ENCODE measurements at regions of chr14 and their contacts with region 1.

Region 1: GRCh38 chr14:76962303-76962660 is 66.2 kb downstream of the IRF2BPL start:
- DNase-seq: peak; percentile 51
- ATAC-seq: peak; percentile 6
- H3K4me3 Mint-ChIP-seq: peak overlapping the region; percentile 83
- H3K27ac Mint-ChIP-seq: peak overlapping the region; percentile 98
- H3K4me1 Mint-ChIP-seq: peaks cover 77% of the 10 kb centered on the region
- H3K27me3 Mint-ChIP-seq: no peaks in the 10 kb centered on the region

Region 2: DNA sequence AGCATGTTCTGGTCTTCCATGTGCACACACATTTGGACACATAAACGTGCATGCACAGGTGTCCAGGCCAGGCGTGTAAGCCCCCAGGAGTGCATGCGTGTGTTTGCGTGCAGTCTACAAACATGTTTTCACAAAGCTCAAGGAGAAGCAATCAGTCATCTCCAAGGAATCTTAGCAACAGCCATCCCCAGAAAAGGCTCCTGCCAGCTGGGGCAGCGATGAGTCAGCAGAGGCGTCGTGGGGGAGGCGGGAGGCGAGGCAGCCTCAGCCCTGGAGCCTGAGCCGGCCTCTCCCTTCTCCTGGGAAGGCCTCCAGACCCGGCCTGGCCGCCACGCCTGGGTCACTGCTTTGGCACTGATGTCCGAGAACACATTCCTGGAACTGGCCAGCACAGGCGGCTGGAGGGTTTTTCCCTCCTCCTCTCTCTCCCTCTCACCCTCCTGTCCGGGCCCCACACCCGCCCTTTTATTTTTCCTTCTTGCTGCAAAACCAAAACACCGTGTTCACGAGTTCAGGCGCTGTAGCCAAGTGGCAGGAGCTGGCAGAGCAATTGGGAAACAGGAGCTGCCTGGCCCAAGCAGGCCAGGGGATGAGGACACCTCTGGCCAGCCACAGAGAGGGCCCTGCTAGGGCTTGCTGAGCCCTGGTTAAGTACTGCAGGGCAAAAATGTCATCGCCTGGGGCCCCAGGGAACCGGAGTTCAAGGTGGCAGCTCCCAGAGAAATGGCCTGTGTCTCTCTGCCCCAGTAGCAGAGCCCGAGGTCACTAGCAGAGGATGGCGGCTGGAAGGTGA is 43.3 kb before region 1 on chr14:
- POLR2A ChIA-PET with region 1: interaction called, 26 read pairs
- DNase-seq: no peak
- ATAC-seq: no peak
- H3K4me3 Mint-ChIP-seq: peak overlapping the region; percentile 47
- H3K27ac Mint-ChIP-seq: peak overlapping the region; percentile 58
- H3K4me1 Mint-ChIP-seq: peaks cover 49% of the 10 kb centered on the region
- H3K27me3 Mint-ChIP-seq: peaks cover 3% of the 10 kb centered on the region

Region 3: DNA sequence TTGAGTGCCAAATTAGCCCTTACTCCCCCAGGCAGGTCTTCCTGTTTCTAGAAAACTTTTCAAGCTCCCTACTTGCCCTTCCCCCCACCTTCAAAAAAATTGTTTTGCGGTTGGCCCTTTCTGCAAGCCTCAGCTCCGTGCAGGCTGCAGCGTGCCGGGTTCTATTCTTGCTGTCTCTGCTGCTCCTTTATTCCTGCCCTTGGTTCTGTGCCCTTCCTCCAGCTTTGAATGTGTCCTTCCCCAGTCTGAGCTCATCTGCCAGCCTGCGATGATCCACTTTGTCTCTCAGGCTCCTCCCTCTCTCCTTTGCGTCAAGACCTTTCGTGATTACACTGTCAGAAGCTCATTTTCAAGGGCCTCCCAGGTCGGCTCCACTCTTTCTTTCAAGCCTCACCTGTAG is 32.4 kb before region 1 on chr14:
- POLR2A ChIA-PET with region 1: interaction called, 25 read pairs
- DNase-seq: peak; percentile 67
- ATAC-seq: peak; percentile 75
- H3K4me3 Mint-ChIP-seq: peak overlapping the region; percentile 71
- H3K27ac Mint-ChIP-seq: peak overlapping the region; percentile 87
- H3K4me1 Mint-ChIP-seq: peaks cover 67% of the 10 kb centered on the region
- H3K27me3 Mint-ChIP-seq: no peaks in the 10 kb centered on the region

Region 4: GRCh38 chr14:76947078-76947837 is 15.0 kb before region 1 on chr14:
- POLR2A ChIA-PET with region 1: interaction called, 37 read pairs
- DNase-seq: peak; percentile 78
- ATAC-seq: peak; percentile 94
- H3K4me3 Mint-ChIP-seq: peak overlapping the region; percentile 49
- H3K27ac Mint-ChIP-seq: peak overlapping the region; percentile 72
- H3K4me1 Mint-ChIP-seq: peaks cover 42% of the 10 kb centered on the region
- H3K27me3 Mint-ChIP-seq: no peaks in the 10 kb centered on the region

Region 5: GRCh38 chr14:76977793-76978720 is 15.8 kb after region 1 on chr14:
- POLR2A ChIA-PET with region 1: interaction called, 39 read pairs
- DNase-seq: peak; percentile 73
- ATAC-seq: peak; percentile 98
- H3K4me3 Mint-ChIP-seq: peak overlapping the region; percentile 72
- H3K27ac Mint-ChIP-seq: peak overlapping the region; percentile 94
- H3K4me1 Mint-ChIP-seq: peaks cover 30% of the 10 kb centered on the region
- H3K27me3 Mint-ChIP-seq: no peaks in the 10 kb centered on the region

Region 6: DNA sequence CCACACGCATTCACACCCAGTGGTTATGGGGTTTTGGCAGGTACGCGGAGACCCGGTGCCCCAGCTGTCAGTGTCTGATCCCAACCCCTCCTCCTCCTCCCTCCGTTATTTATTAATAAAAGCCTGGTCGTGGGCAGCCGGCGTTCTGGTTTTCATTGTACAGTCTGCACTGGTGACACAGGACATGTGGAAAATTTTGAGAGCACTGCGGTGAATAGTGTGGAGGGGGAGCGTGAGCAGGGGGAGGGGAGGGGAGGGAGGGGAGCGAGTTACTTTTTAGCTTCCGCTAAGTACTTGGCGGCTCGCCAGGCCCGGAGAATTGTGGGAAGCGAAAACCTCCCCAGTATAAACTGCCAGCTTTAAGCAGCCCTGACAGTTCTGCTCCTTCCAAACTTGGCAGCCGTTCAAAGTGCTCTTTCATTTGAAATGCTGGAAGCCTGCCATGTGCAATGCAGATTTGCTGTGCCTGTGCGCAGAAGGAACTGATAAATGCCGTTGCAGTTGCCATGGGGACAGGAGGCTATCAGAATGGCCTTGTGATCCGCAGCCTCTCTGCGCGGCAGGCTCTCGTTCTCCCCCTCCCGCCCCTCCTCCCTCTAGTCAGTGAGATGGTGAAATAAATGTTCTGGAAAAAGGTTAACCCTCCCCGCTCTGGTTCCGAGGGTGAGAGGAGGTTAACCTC is 77.9 kb after region 1 on chr14:
- POLR2A ChIA-PET with region 1: interaction called, 238 read pairs
- DNase-seq: peak; percentile 93
- ATAC-seq: peak; percentile 70
- H3K4me3 Mint-ChIP-seq: peak overlapping the region; percentile 87
- H3K27ac Mint-ChIP-seq: peak overlapping the region; percentile 99
- H3K4me1 Mint-ChIP-seq: peaks cover 72% of the 10 kb centered on the region
- H3K27me3 Mint-ChIP-seq: no peaks in the 10 kb centered on the region

Measured in activated naive CD8-positive, alpha-beta T cell treated with anti-CD3 and anti-CD28 coated beads, Interleukin-2, amount 10 ng/mL, durations not matched to agents 7 days and 5 days (primary cell).